Transverse colon (tissue), 4 donors: ENCODE measurements at regions of chr15 and their contacts with region 1.

Region 1: GRCh38 chr15:74251131-74251811 is 15.1 kb downstream of the CCDC33 start:
- DNase-seq: no peak
- H3K4me3 ChIP-seq: no peak overlapping the region
- H3K27ac ChIP-seq: no peak overlapping the region
- H3K4me1 ChIP-seq: no peaks in the 10 kb centered on the region
- H3K27me3 ChIP-seq: peaks cover under 1% of the 10 kb centered on the region
- CTCF ChIP-seq: no peak
- EP300 ChIP-seq: no peak
- POLR2A ChIP-seq: no peak

Region 2: DNA sequence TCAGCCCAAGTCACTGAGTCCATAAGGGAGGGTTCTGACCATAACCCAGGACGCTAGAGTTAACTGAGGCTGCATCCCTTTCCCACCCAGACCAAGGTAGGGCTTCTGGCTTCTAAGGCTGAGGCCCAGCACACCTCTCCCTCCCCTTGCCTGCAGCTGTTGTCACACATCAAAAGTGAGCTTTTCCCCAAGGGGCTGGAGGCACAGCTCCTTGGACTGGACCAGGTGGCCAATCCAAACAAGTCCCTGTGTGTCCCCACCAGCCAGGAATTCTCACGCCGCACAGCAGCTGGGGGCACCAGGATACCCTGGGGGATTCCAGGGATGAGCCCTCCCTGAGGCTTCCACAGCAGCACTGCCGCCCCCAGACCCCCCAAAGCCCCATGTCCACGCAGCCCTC is 143.2 kb before region 1 on chr15:
- in situ Hi-C with region 1: no loop called
- intact Hi-C with region 1: no loop called
- DNase-seq: no peak
- H3K4me3 ChIP-seq: no peak overlapping the region
- H3K27ac ChIP-seq: no peak overlapping the region
- H3K4me1 ChIP-seq: no peaks in the 10 kb centered on the region
- H3K27me3 ChIP-seq: no peaks in the 10 kb centered on the region
- CTCF ChIP-seq: no peak
- EP300 ChIP-seq: no peak
- POLR2A ChIP-seq: no peak

Region 3: DNA sequence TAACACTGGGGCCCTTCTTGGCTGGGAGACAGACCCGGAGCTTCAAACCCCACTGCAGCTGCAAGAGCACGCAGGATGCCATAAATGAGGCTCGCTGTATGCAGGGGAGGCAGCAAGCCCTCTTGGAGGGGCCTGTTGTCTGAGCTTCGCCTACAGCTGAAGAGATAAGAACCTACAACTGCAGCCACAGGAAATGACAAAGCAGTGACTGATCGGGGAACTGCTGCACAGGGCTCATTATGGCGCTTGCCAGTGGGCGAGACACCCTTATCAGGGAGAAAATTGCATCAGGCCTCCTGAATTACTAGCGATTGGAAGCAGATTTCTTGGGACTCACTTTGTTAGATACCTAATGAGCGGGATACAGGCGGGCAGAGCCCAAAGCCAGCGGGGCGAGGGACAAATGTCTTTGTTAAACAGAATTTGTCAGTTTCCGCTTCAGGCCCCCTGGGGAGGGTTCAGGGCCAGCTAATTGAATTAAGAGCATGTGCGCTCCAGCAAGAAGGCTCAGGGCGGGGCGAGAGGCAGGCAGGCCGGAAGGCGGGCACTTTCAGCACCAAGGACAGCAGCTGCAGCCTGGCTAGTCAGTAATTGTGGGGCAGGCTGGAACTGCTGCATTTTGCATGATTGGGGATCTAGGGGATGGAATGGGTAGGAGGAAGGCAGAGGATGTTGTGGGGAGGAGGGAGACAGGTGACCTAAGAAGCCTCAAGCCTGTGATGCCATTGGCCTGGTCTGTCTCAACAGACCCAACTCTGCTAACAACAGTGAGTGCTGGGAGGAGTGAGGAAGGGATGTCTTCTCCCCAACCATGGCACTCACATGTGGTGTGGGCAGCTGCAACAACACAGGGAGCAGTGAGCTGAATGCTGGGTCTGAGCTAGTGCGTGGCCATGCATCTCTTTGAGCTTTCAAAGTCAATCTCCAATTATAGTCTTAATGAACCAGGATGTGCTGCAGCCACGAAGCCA is 40.1 kb after region 1 on chr15:
- in situ Hi-C with region 1: no loop called
- intact Hi-C with region 1: loop called (anchors 1 kb)
- DNase-seq: peak; percentile 66
- H3K4me3 ChIP-seq: no peak overlapping the region
- H3K27ac ChIP-seq: no peak overlapping the region
- H3K4me1 ChIP-seq: no peaks in the 10 kb centered on the region
- H3K27me3 ChIP-seq: peaks cover 5% of the 10 kb centered on the region
- CTCF ChIP-seq: no peak
- EP300 ChIP-seq: no peak
- POLR2A ChIP-seq: no peak

Region 4: GRCh38 chr15:74906446-74907162 is 655.3 kb after region 1 on chr15 and contains the start of gene FAM219B:
- in situ Hi-C with region 1: no loop called
- intact Hi-C with region 1: no loop called
- DNase-seq: peak; percentile 95
- H3K4me3 ChIP-seq: peak within 1 kb of the TSS; percentile 79 to 88 (median 80)
- H3K27ac ChIP-seq: peak within 1 kb of the TSS; percentile 94 to 98 (median 96)
- H3K4me1 ChIP-seq: peaks cover 14 to 32% (median 22%) of the 10 kb centered on the region in 4 donors
- H3K27me3 ChIP-seq: no peaks in the 10 kb centered on the region
- CTCF ChIP-seq: no peak
- EP300 ChIP-seq: no peak
- POLR2A ChIP-seq: peak; percentile 73
- total RNA-seq, gene FAM219B: 62.8 to 428 (median 68.7) TPM